Activated T-helper 1 cell treated with anti-CD3 and anti-CD28 coated beads, Interleukin-12 subunit alpha, Interleukin-12 subunit beta, Interleukin-2, Interleukin-4 antibody, amounts not matched to agents 30 ng/mL and 10 ng/mL and 1 ng/mL, durations not matched to agents 14 hours and 24 hours and 36 hours (primary cell): ENCODE measurements at regions of chr13 and their contacts with region 1.

Region 1: GRCh38 chr13:30465585-30466357 is at the start of gene HMGB1:
- DNase-seq: peak; percentile 97
- H3K4me3 Mint-ChIP-seq: peak within 1 kb of the TSS; percentile 94
- H3K27ac Mint-ChIP-seq: peak within 1 kb of the TSS; percentile 100
- H3K4me1 Mint-ChIP-seq: peaks cover 28% of the 10 kb centered on the region
- H3K27me3 Mint-ChIP-seq: no peaks in the 10 kb centered on the region
- total RNA-seq, gene HMGB1: 593 and 606 TPM in 2 replicates

Region 2: GRCh38 chr13:29595380-29596063 is 870.2 kb before region 1 on chr13 and contains the start of gene SLC7A1:
- intact Hi-C with region 1: loop called (anchors 1 kb)
- DNase-seq: peak; percentile 88
- H3K4me3 Mint-ChIP-seq: peak within 1 kb of the TSS; percentile 95
- H3K27ac Mint-ChIP-seq: peak within 1 kb of the TSS; percentile 95
- H3K4me1 Mint-ChIP-seq: peaks cover 51% of the 10 kb centered on the region
- H3K27me3 Mint-ChIP-seq: peaks cover 6% of the 10 kb centered on the region
- total RNA-seq, gene SLC7A1: 128 and 138 TPM in 2 replicates

Region 3: DNA sequence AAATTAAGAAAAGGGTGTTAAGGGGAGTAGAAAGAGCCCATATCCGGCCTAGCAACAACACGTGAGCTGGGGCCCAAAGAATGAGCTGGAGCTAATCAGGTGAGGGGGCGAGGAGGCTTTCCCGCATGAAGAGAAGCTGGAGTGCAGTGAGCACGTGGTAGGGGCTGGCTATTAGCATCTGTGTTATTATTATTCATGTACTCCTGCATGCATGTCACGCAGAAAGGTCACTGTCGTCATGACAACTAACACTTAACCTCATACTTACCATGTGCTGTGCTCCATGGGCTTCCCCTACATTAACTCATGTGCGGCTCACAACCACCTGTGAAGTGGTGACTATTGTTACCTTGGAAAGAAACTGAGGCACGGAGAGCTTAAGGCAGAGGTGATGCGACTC is 387.7 kb before region 1 on chr13:
- intact Hi-C with region 1: no loop called
- DNase-seq: no peak
- H3K4me3 Mint-ChIP-seq: no peak overlapping the region
- H3K27ac Mint-ChIP-seq: no peak overlapping the region
- H3K4me1 Mint-ChIP-seq: no peaks in the 10 kb centered on the region
- H3K27me3 Mint-ChIP-seq: peaks cover 1% of the 10 kb centered on the region

Region 4: GRCh38 chr13:30132623-30133553 is 332.9 kb before region 1 on chr13:
- intact Hi-C with region 1: loop called (anchors 1 kb)
- DNase-seq: peak; percentile 92
- H3K4me3 Mint-ChIP-seq: no peak overlapping the region
- H3K27ac Mint-ChIP-seq: peak overlapping the region; percentile 67
- H3K4me1 Mint-ChIP-seq: peaks cover 18% of the 10 kb centered on the region
- H3K27me3 Mint-ChIP-seq: no peaks in the 10 kb centered on the region

Region 5: DNA sequence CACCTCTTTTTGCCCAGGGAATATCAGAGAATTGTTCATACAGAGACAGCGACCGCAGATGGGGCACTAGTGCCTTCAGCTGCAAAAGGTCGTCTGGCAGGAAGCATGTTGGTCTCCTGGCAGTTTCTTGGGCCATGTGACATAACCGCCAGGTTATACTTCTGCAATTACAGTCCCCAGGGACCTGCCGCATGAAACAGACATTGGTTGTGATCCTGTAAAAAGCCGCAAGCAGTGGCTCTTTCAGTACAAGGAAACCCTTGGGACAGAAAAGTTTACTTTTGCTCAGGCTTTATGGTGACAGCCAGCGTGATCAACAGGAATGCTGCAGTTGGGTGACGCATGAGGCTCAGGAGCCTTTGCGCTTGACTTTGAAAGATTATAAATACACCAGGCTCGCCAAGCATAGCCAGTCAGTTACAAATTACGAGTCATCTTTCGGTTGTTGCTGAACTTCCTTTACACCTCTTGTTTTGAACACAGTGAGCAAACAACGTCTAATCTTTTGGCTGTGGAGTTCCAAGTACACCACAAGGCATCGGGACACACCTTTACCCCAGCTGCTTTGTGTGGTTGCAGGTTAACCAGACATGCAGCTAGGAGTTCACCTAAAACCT is 94.0 kb before region 1 on chr13:
- intact Hi-C with region 1: loop called (anchors 2 kb)
- DNase-seq: peak; percentile 65
- H3K4me3 Mint-ChIP-seq: peak overlapping the region; percentile 68
- H3K27ac Mint-ChIP-seq: peak overlapping the region; percentile 84
- H3K4me1 Mint-ChIP-seq: peaks cover 80% of the 10 kb centered on the region
- H3K27me3 Mint-ChIP-seq: no peaks in the 10 kb centered on the region

Region 6: GRCh38 chr13:30422054-30422839 is 43.5 kb before region 1 on chr13 and contains the start of gene UBE2L5:
- intact Hi-C with region 1: loop called (anchors 1 kb)
- DNase-seq: peak; percentile 75
- H3K4me3 Mint-ChIP-seq: peak within 1 kb of the TSS; percentile 88
- H3K27ac Mint-ChIP-seq: peak within 1 kb of the TSS; percentile 86
- H3K4me1 Mint-ChIP-seq: peaks cover 26% of the 10 kb centered on the region
- H3K27me3 Mint-ChIP-seq: peaks cover 4% of the 10 kb centered on the region
- total RNA-seq, gene UBE2L5: not detected in 2 replicates

Region 7: DNA sequence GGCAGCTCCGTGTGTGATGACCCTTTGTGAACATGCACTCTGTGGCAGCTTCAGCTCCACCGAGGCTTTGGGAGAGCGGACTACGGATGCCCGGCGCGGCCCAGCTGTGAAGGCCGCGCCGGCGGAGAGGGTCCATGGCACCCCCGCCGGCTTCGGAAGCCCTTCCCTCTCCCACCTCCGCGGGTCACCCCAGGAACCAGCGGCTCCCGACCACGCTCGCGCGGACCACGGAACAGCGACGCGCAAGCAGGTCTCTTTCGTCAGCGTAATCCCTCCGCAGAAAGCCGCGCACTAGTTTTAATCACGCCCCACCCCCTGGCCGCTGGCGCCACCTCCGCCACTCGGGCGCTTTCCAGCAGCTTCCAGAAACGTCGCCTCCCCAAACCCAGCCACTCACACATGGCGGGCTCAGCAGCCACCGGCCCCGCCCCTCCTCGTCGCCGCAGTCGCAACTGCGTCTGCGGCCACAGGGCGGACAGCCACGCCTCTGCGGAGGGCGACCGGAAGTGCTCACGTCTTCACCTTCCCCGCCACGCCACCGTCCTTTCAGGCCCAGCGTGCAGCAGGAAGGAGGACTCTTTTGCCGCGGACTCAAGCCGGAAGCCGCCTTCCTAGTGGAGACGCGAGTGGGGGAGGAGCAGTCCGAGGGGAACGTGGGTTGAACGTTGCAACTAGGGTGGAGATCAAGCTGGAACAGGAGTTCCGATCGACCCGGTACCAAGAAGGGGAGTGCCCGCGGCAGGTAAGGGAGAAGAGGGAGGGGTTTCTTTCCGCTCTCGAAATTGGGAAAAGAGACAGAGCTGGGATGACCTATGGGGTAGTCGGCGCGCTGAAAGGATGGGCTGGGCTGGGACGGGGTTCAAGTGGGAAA is 151.8 kb after region 1 on chr13 and contains the start of gene USPL1:
- intact Hi-C with region 1: loop called (anchors 1 kb)
- DNase-seq: peak; percentile 99
- H3K4me3 Mint-ChIP-seq: no peak within 1 kb of the TSS
- H3K27ac Mint-ChIP-seq: no peak within 1 kb of the TSS
- H3K4me1 Mint-ChIP-seq: peaks cover 12% of the 10 kb centered on the region
- H3K27me3 Mint-ChIP-seq: no peaks in the 10 kb centered on the region
- total RNA-seq, gene USPL1: 17.2 and 17.5 TPM in 2 replicates

Region 8: DNA sequence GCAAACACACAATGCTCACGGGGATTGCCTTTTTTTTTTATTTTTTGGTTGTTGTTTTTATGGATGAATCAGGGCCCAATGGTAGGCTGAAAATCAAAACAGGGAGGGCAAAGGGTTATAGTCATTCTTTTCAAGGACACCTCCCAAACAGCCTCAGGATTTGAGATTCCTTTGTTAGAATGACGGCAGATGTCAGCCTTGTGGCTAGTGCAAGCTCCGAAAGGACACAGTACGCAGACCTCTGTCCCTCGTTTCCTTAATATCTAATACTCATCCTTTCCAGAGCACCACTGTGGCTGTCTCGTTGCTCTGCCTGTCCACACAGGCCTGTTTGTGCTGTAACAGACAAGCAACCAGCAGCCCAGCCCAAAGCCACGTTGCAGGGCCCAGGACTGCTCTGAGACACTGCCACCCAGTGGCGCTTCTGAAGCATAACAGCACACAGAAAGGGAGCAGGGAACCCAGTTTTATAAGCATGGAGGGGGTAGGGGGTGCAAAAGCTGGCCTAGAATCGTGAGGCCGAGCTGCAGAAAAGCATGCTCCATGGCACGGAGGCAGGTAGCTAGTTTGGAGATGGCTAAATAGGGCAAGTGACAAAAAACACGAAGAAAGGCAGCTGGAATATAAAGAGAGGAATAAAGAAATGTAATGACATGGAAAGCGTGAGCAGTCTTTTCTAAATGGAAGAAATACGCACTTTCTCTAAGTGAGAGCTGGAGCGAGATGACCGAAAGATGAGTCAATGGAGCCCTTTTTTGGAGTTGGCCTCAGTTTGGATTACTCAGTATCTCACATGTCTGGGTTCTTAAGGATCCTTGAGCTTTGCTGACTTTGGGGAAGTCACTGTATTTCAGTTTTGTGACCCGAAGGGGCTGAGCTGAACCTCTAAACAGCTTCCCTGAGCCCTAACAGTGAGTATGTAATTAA is 399.6 kb after region 1 on chr13:
- intact Hi-C with region 1: loop called (anchors 5 kb)
- DNase-seq: peak; percentile 9
- H3K4me3 Mint-ChIP-seq: no peak overlapping the region
- H3K27ac Mint-ChIP-seq: no peak overlapping the region
- H3K4me1 Mint-ChIP-seq: no peaks in the 10 kb centered on the region
- H3K27me3 Mint-ChIP-seq: peaks cover 11% of the 10 kb centered on the region